Mucosa of descending colon (tissue), 3 donors: ENCODE measurements at regions of chr9 and their contacts with region 1.

Region 1: DNA sequence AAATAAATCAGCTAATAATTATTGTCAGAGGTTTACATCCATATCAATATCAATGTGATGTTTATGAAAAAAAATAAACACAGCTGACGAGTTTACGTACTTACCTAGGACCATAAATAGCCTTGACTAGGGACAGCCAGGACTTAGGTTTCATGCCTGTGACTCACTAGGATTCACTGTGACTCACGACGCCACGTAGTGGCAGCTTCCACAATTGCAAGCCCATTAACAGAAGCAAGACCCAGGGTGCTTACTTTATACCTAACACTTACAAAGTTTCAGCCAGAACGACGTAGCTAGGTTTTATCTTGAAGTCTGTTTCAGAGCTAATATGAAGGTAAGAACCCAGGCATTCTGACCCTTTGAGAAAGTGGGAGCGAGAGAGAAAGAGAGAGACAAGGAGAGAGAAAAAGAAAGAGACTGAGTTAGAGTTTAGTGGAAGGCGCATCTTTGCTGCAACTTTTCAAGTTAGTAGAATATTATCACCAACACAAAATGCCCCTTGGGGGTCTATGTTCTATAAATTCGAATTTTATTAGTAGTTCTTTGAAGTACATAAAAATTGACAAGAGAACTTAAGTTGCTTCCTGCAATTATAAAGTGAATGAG is 191.2 kb downstream of the GNA14 start:
- DNase-seq: peak; percentile 80 to 96 (median 88)
- ATAC-seq: peak; percentile 94
- H3K4me3 ChIP-seq: no peak overlapping the region
- H3K4me1 ChIP-seq: peaks cover 3% of the 10 kb centered on the region
- CTCF ChIP-seq: peak; percentile 89

Region 2: GRCh38 chr9:77616191-77616590 is 159.3 kb after region 1 on chr9:
- intact Hi-C with region 1: no loop called
- DNase-seq: no peak
- ATAC-seq: no peak
- H3K4me3 ChIP-seq: no peak overlapping the region
- H3K4me1 ChIP-seq: no peaks in the 10 kb centered on the region
- CTCF ChIP-seq: no peak

Region 3: GRCh38 chr9:77648234-77649120 is 191.5 kb after region 1 on chr9 and contains the start of gene GNA14:
- intact Hi-C with region 1: loop called in 1 of 2 experiments (anchors 10 kb)
- DNase-seq: peak; percentile 75 to 79 (median 78)
- ATAC-seq: peak; percentile 83
- H3K4me3 ChIP-seq: peak within 1 kb of the TSS; percentile 22
- H3K4me1 ChIP-seq: no peaks in the 10 kb centered on the region
- CTCF ChIP-seq: no peak
- total RNA-seq, gene GNA14: 7.0 to 14.6 (median 7.4) TPM

Region 4: GRCh38 chr9:77751341-77752091 is 294.6 kb after region 1 on chr9:
- intact Hi-C with region 1: loop called in 1 of 2 experiments (anchors 5 kb)
- DNase-seq: peak in 1 of 3 donors; percentile 70
- ATAC-seq: peak; percentile 81
- H3K4me3 ChIP-seq: no peak overlapping the region
- H3K4me1 ChIP-seq: peaks cover 11% of the 10 kb centered on the region
- CTCF ChIP-seq: peak; percentile 17